ENCODE measurements at regions of chr14 and their contacts with region 1.

Region 1: DNA sequence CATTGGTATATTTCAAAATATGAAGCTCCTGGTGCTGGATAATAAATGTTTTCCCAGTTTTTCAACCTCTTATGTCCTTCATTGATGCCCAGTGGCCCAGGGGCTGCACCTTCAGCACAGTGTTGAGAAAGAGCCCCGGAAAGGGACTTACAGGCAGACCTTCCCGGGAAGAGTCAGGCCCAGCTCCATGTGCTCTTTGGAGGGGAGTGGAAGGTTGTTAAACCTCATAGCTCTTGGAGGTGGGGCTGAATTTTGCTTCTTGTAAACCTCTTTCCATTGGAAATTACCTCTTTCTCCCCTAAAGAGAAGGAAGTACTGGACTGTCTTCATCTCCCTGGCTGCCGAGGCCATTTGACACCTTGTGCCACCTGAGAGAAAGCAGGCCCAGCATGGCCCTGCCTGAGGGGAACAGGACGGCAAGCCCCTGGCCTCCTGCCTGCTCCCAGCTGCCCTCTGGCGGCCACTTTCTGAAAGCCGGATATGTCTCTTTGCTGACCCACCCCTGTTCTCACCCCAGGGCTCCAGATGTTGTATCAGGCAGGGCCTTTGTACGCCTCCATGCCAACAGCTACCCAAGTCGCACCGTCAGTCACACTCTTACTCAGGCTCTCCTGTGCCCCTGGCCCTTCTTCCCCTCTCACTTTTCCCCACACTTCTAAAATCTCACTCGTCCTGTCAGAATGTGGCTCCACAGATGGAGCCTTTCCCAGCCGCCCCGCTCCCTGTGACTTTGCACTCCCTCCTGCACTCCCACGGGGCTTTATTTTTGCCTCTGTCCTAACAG is 43.0 kb downstream of the EVL start:
- DNase-seq: no peak
- H3K4me3 ChIP-seq: no peak overlapping the region
- H3K27me3 ChIP-seq: no peaks in the 10 kb centered on the region
- CTCF ChIP-seq: peak; percentile 96

Region 2: DNA sequence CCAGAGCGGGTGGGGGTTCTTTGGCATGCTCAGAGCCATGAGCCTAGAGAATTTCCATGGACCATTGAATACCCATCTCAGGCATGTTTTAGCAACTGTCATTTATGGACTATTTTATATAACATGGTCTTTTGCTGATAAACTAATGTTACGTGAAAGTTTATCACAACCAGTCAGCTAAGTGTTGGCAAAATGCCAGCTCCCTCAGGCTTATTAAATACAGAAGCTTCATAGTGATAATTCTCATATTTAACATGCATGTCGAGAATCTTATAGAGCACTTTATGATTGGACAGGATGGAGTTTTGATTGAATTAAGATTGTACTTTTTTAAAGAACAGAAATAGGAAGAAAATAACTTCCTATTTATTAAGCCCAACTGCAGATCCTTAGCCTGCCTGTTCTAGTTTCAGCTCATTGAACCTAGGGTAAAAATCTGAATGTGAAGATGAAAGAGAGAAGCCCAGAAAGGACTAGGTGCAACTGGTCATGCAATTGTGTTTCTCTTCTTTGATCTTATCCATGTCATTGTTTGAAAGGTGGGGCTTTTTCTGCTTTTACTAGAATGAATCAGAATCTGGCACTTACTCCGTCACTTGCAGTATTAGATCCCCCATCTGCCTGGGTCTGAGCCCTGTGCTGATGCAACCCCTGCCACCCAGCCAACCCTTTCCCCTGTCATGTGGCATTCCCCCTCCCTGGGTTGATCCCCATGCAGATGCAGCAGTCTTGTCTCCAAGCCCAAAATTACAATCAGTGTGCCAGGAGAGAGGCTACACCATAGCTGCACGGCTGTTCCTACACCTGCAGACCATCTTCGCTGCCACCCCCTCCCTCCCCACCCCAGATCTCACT is 177.6 kb before region 1 on chr14:
- CTCF ChIA-PET with region 1: no interaction called
- POLR2A ChIA-PET with region 1: no interaction called
- DNase-seq: no peak
- H3K4me3 ChIP-seq: no peak overlapping the region
- H3K27me3 ChIP-seq: no peaks in the 10 kb centered on the region
- CTCF ChIP-seq: no peak

Region 3: DNA sequence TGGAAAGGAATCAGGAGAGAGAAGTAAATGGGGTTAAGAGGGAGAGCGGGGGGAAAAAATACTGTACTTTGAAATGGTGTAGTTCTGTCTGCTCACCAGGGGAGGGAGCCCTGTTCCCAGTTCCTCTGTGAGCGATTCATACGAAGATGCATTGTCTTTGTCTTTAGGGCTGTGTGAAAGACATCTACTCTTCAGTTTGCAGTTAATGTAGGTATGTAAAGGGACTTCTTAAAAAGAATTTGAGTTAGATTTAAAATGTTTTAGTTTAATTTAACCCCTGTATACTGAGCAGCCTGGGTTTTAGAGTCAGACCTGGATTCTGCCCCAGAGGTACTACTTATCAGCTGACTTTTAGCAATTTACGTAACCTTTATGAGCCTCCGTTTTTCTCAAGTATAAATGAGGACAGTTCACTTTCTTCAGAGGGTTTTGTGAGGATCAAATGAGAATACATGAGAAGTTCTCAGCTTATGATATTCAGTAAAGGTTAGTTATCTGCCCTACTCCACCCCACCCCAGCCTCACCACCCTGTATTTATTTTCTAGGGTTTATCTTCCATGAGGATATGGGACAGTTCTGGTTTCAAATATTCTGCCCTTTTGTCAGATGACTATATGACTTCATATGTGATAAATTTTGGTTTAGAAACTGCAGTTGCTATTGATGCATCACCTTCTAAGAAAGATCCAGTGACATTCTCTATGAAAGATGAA is 125.5 kb before region 1 on chr14:
- CTCF ChIA-PET with region 1: interaction called, 114 read pairs
- POLR2A ChIA-PET with region 1: no interaction called
- DNase-seq: no peak
- H3K4me3 ChIP-seq: no peak overlapping the region
- H3K27me3 ChIP-seq: no peaks in the 10 kb centered on the region
- CTCF ChIP-seq: peak; percentile 84

Region 4: DNA sequence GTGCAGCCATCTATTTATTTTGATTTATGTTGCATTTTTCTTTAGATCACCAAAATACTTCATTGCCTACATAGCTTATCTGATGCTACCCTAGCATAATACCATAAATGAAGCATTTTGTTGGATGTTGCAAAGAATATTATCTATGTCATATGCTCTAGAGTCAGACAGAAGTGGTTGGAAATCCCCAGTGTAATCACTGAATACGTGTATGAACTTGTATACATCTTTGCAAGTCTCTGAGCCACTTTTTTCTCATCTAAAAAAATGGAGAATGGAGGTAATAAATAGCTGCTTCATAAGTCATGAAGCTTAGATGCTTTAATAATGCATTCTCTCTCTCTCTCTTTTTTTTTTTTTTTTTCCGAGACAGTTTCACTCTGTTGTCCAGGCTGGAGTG is 24.5 kb before region 1 on chr14:
- CTCF ChIA-PET with region 1: interaction called, 21 read pairs
- POLR2A ChIA-PET with region 1: no interaction called
- DNase-seq: no peak
- H3K4me3 ChIP-seq: no peak overlapping the region
- H3K27me3 ChIP-seq: no peaks in the 10 kb centered on the region
- CTCF ChIP-seq: no peak

Region 5: GRCh38 chr14:100096570-100096971 is 11.7 kb before region 1 on chr14:
- CTCF ChIA-PET with region 1: interaction called, 22 read pairs
- POLR2A ChIA-PET with region 1: no interaction called
- DNase-seq: no peak
- H3K4me3 ChIP-seq: no peak overlapping the region
- H3K27me3 ChIP-seq: no peaks in the 10 kb centered on the region
- CTCF ChIP-seq: no peak

Measured in BJ (cell line).